ENCODE measurements at regions of chr18 and their contacts with region 1.

Region 1: GRCh38 chr18:39681061-39681460 is 2115.5 kb upstream of the CELF4 start:
- DNase-seq: no peak
- ATAC-seq: no peak
- H3K4me3 Mint-ChIP-seq: no peak overlapping the region
- H3K27ac Mint-ChIP-seq: no peak overlapping the region
- H3K4me1 Mint-ChIP-seq: no peaks in the 10 kb centered on the region
- H3K27me3 Mint-ChIP-seq: no peaks in the 10 kb centered on the region

Region 2: DNA sequence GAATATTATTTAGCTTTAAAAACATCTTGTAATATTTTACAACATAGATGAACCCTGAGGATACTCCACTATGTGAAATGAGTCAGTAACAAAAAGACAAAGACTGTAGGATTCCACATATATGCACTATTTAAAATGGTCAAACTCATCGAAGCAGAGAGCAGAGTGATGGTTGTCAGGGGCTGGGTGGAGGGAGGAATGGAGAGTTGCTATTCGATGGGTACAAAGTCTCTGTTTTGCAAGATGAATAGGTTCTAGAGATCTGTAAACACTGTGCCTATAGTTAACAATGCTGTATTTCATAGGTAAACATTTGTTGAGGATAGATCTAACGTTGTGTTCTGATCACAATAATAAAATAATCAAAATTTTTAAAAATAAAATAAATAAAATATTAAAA is 439.5 kb before region 1 on chr18:
- CTCF ChIA-PET with region 1: no interaction called
- POLR2A ChIA-PET with region 1: no interaction called
- intact Hi-C with region 1: loop called in 1 of 2 experiments (anchors 10 kb)
- DNase-seq: no peak
- ATAC-seq: no peak
- H3K4me3 Mint-ChIP-seq: no peak overlapping the region
- H3K27ac Mint-ChIP-seq: no peak overlapping the region
- H3K4me1 Mint-ChIP-seq: no peaks in the 10 kb centered on the region
- H3K27me3 Mint-ChIP-seq: no peaks in the 10 kb centered on the region